Activated CD8-positive, alpha-beta T cell treated with anti-CD3 and anti-CD28 coated beads, Interleukin-2, amount 10 ng/mL, durations not matched to agents 7 days and 5 days (primary cell): ENCODE measurements at regions of chr22 and their contacts with region 1.

Region 1: DNA sequence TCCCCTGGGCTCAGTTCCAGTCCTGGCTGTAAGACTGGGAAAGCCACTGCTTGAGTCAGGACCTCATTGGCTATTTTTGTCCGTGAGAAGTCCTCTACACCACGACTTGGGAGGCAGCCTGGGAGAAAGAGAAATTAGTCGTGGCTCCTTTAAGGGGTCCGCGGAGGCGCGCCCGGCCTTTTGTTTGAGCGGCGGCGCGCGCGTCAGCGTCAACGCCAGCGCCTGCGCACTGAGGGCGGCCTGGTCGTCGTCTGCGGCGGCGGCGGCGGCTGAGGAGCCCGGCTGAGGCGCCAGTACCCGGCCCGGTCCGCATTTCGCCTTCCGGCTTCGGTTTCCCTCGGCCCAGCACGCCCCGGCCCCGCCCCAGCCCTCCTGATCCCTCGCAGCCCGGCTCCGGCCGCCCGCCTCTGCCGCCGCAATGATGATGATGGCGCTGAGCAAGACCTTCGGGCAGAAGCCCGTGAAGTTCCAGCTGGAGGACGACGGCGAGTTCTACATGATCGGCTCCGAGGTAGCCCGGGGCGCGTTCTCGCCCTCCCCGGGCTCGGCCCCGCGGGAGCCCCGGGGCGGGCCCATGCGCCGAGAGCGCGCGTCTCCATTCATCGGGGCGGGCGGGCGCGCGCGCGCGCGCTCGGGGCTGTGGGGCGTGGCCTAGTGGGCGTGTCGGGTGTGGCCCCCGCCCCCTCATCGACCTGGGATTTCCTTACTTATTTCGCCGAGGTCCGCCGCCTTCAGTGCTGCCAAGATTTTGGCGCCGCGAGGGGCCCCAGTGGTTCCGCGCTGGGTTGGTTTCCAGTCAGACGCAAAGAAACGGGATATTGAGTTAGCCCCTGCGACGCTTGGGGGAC is at the start of gene SMARCB1:
- DNase-seq: peak; percentile 89
- ATAC-seq: peak; percentile 80
- H3K4me3 Mint-ChIP-seq: peak within 1 kb of the TSS; percentile 91
- H3K27ac Mint-ChIP-seq: peak within 1 kb of the TSS; percentile 96
- H3K4me1 Mint-ChIP-seq: peaks cover 56% of the 10 kb centered on the region
- H3K27me3 Mint-ChIP-seq: no peaks in the 10 kb centered on the region
- total RNA-seq, gene SMARCB1: 112 to 113 TPM

Region 2: GRCh38 chr22:23774743-23775566 is 12.0 kb before region 1 on chr22:
- CTCF ChIA-PET with region 1: interaction called, 5 read pairs
- POLR2A ChIA-PET with region 1: interaction called, 18 read pairs
- DNase-seq: no peak
- ATAC-seq: no peak
- H3K4me3 Mint-ChIP-seq: no peak overlapping the region
- H3K27ac Mint-ChIP-seq: no peak overlapping the region
- H3K4me1 Mint-ChIP-seq: peaks cover 20% of the 10 kb centered on the region
- H3K27me3 Mint-ChIP-seq: peaks cover 8% of the 10 kb centered on the region

Region 3: DNA sequence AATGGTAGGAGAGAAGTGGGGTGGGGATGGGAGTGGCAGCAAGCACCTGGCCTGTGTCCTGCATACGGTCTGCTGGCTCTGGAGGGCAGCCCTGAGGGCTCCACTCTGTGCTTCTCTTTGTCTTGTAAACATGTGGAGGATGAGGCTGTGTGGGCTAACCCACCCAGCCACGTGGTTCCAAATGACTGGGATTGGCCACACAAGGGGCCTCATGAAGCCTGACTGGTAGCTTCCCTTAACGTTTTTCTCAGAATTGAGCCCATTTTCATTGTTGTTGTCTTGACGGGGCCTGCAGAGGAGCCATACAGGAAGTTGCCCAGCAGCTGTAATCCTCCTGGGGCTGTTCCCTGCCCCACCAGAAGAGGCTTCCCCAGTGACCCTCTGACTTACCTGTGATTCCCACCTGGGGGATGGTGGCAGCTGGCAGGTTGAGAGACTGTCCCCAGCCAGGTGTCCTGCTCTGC is 33.8 kb after region 1 on chr22:
- CTCF ChIA-PET with region 1: interaction called, 6 read pairs
- POLR2A ChIA-PET with region 1: interaction called, 12 read pairs
- DNase-seq: peak; percentile 84
- ATAC-seq: peak; percentile 89
- H3K4me3 Mint-ChIP-seq: peak overlapping the region; percentile 41
- H3K27ac Mint-ChIP-seq: peak overlapping the region; percentile 97
- H3K4me1 Mint-ChIP-seq: peaks cover 58% of the 10 kb centered on the region
- H3K27me3 Mint-ChIP-seq: no peaks in the 10 kb centered on the region